Aorta (tissue), 5 donors: ENCODE measurements at regions of chr11 and their contacts with region 1.

Region 1: GRCh38 chr11:11293798-11294550 is 59.1 kb downstream of the CSNK2A3 start:
- DNase-seq: no peak
- ATAC-seq: no peak
- H3K4me3 ChIP-seq: no peak overlapping the region
- H3K27ac ChIP-seq: no peak overlapping the region
- H3K4me1 ChIP-seq: no peaks in the 10 kb centered on the region
- H3K27me3 ChIP-seq: no peaks in the 10 kb centered on the region

Region 2: DNA sequence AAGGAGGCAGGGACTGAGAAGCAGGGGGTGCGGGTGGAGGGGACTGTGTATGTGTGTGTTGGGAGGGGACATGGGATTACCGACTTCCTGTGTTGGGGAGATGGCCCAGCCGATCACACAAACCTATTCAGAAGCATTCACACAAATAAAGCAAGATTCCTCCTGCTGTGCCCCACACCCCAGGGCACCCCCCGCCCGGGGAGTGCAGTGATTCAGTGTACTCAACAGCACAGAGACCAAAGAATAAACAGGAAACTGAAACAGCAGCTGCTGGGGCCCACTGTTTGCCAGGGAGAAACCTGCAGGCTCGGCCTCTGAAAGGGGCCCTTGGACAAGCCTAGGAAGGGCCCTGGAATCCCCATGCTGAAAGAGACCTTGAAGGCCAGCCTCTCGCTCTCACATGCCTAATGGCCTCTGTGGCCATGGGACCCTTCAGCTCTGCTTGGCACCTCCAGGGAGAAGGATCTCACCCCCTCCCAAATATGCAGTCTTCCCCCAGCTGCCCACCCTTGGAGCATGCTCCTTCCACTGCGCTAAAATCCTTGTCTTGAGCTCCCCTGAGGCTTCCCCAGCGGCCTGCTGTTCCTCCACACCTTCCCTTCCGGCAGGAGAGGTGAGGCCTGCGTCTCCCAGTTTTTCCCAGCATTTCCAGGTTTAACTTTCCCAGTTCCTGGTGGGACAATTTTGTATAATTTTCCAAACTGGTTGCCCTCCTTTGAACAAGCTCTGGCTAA is 13.9 kb before region 1 on chr11:
- intact Hi-C with region 1: loop called in 1 of 2 experiments (anchors 1 kb)
- DNase-seq: no peak
- ATAC-seq: no peak
- H3K4me3 ChIP-seq: no peak overlapping the region
- H3K27ac ChIP-seq: no peak overlapping the region
- H3K4me1 ChIP-seq: no peaks in the 10 kb centered on the region
- H3K27me3 ChIP-seq: no peaks in the 10 kb centered on the region